GM13977 (cell line): ENCODE measurements at regions of chr4 and their contacts with region 1.

Region 1: GRCh38 chr4:112775801-112776200 is 138.9 kb downstream of the LARP7 start:
- DNase-seq: no peak
- CTCF ChIP-seq: no peak

Region 2: GRCh38 chr4:111610681-111611080 is 1165.1 kb before region 1 on chr4:
- in situ Hi-C with region 1: no loop called
- DNase-seq: no peak
- CTCF ChIP-seq: no peak

Region 3: GRCh38 chr4:112127803-112128202 is 648.0 kb before region 1 on chr4:
- in situ Hi-C with region 1: no loop called
- DNase-seq: no peak
- CTCF ChIP-seq: no peak

Region 4: DNA sequence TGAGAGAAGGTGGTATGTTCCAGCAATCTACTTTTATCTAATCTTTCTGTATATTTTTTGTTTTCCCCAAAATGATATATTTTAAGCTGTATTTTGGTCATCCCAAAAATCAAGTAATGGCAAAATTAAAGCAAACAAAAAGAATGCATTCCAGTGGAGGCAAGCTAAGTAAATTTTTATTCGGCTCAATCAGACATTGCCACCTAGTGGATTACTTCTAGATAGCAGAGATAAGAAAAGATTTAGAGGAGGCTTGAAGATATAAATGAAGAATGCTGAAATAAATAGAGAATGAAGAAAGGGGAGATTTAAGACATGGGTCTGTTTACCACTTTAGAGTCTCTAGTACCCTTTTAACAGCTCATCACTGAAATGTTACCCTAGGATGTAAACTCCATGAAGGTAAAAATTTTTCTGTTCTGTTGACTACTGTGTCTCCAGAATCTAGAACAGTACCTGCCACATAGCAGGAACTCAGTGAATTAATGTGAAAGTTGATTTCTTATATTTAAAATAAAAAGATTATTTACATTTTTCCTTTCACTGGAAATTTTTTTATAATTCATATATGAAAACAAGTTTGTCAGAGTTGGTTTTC is 162.8 kb after region 1 on chr4:
- in situ Hi-C with region 1: loop called (anchors 10 kb)
- DNase-seq: peak; percentile 53
- CTCF ChIP-seq: peak; percentile 67

Region 5: GRCh38 chr4:113080050-113080449 is 304.2 kb after region 1 on chr4:
- in situ Hi-C with region 1: no loop called
- DNase-seq: no peak
- CTCF ChIP-seq: no peak